CD8-positive, alpha-beta T cell (primary cell): ENCODE measurements at regions of chr19 and their contacts with region 1.

Region 1: DNA sequence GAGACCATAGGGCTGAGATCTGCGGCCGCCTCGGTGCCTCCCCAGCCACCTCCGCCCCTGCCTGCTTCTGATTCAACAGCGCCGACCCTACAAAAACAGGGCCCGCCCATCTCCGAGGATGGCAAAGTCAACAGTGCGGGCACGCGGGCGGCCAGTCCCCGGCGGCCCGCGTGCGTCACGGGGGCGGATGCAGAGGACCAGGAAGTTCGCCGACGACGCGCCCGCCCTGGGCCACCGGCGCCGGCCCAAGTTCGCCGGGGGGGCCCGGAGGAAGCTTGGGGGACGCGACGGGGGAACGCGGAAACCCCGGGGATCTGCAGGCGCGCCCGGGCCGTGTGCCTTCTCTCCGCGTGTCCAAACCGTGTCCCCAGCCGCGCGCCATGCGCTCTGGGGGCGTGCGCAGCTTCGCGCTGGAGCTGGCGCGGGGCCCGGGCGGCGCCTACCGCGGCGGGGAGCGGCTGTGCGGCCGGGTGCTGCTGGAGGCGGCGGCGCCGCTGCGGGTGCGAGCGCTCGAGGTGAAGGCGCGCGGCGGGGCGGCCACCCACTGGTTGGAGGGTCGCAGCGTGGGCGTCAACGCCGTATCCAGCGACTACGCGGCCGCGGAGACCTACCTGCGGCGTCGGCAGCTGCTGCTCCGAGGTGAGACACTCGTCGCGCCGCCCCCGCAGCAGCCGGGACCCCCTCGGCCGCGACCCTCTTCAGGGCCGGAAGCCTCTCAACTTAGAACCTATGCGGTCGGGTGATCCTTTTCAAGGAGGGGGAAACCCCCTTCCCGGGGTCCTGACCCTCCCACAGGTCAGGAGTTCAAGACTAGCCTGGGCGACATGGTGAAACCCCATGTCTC is 6.8 kb upstream of the ARRDC2 start:
- DNase-seq: peak; percentile 90 to 99 (median 96)
- ATAC-seq: peak; percentile 81
- H3K4me3 ChIP-seq: peak overlapping the region; percentile 65 to 69
- H3K4me3 Mint-ChIP-seq: peak overlapping the region; percentile 92
- H3K27ac ChIP-seq: peak overlapping the region; percentile 94
- H3K27ac Mint-ChIP-seq: peak overlapping the region; percentile 98
- H3K4me1 ChIP-seq: peaks cover 29% of the 10 kb centered on the region
- H3K4me1 Mint-ChIP-seq: peaks cover 32% of the 10 kb centered on the region
- H3K27me3 ChIP-seq: no peaks in the 10 kb centered on the region
- H3K27me3 Mint-ChIP-seq: no peaks in the 10 kb centered on the region
- CTCF ChIP-seq: no peak

Region 2: GRCh38 chr19:17448131-17448967 is 552.8 kb before region 1 on chr19 and contains the start of gene TMEM221:
- CTCF ChIA-PET with region 1: no interaction called
- POLR2A ChIA-PET with region 1: no interaction called
- intact Hi-C with region 1: loop called in 1 of 2 experiments (anchors 10 kb)
- DNase-seq: peak; percentile 16 to 76 (median 59)
- ATAC-seq: peak; percentile 81
- H3K4me3 ChIP-seq: peak within 1 kb of the TSS in 1 of 2 experiments; percentile 15
- H3K4me3 Mint-ChIP-seq: peak within 1 kb of the TSS; percentile 53
- H3K27ac ChIP-seq: no peak within 1 kb of the TSS
- H3K27ac Mint-ChIP-seq: no peak within 1 kb of the TSS
- H3K4me1 ChIP-seq: no peaks in the 10 kb centered on the region
- H3K4me1 Mint-ChIP-seq: peaks cover 11% of the 10 kb centered on the region
- H3K27me3 ChIP-seq: peaks cover 3 to 20% of the 10 kb centered on the region in 2 experiments
- H3K27me3 Mint-ChIP-seq: peaks cover 17% of the 10 kb centered on the region
- CTCF ChIP-seq: peak; percentile 61
- total RNA-seq, gene TMEM221: not detected

Region 3: GRCh38 chr19:17725422-17726078 is 275.6 kb before region 1 on chr19:
- CTCF ChIA-PET with region 1: no interaction called
- POLR2A ChIA-PET with region 1: no interaction called
- intact Hi-C with region 1: no loop called
- DNase-seq: peak in 4 of 9 experiments; percentile 22 to 37 (median 26)
- ATAC-seq: no peak
- H3K4me3 ChIP-seq: no peak overlapping the region
- H3K4me3 Mint-ChIP-seq: no peak overlapping the region
- H3K27ac ChIP-seq: no peak overlapping the region
- H3K27ac Mint-ChIP-seq: peak overlapping the region; percentile 45
- H3K4me1 ChIP-seq: peaks cover 17% of the 10 kb centered on the region
- H3K4me1 Mint-ChIP-seq: peaks cover 35% of the 10 kb centered on the region
- H3K27me3 ChIP-seq: no peaks in the 10 kb centered on the region
- H3K27me3 Mint-ChIP-seq: no peaks in the 10 kb centered on the region
- CTCF ChIP-seq: no peak

Region 4: GRCh38 chr19:17873786-17874757 is 127.1 kb before region 1 on chr19:
- CTCF ChIA-PET with region 1: no interaction called
- POLR2A ChIA-PET with region 1: no interaction called
- intact Hi-C with region 1: loop called in 1 of 2 experiments (anchors 5 kb)
- DNase-seq: peak; percentile 34 to 81 (median 66)
- ATAC-seq: peak; percentile 85
- H3K4me3 ChIP-seq: peak overlapping the region; percentile 47 to 59
- H3K4me3 Mint-ChIP-seq: peak overlapping the region; percentile 81
- H3K27ac ChIP-seq: no peak overlapping the region
- H3K27ac Mint-ChIP-seq: no peak overlapping the region
- H3K4me1 ChIP-seq: peaks cover 32% of the 10 kb centered on the region
- H3K4me1 Mint-ChIP-seq: peaks cover 16% of the 10 kb centered on the region
- H3K27me3 ChIP-seq: peaks cover 0 to 15% of the 10 kb centered on the region in 2 experiments
- H3K27me3 Mint-ChIP-seq: no peaks in the 10 kb centered on the region
- CTCF ChIP-seq: no peak

Region 5: DNA sequence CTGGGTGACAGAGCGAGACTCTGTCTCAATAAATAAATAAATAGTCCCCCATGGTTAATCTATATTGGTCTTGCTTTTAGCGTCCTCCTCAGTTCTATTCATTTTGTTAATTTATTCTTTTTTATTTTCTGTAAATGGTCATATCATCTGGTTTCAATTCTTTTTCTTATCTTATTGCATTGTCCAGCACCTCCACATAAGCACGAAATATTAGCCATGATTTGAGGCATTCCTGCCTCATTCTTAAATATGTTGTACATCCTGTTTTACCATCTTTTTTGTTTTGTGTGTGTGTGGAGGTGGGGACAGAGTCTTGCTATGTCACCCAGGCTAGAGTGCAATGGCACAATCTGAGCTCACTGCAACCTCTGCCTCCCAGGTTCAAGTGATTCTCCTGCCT is 92.9 kb before region 1 on chr19:
- CTCF ChIA-PET with region 1: no interaction called
- POLR2A ChIA-PET with region 1: no interaction called
- intact Hi-C with region 1: no loop called
- DNase-seq: no peak
- ATAC-seq: no peak
- H3K4me3 ChIP-seq: no peak overlapping the region
- H3K4me3 Mint-ChIP-seq: no peak overlapping the region
- H3K27ac ChIP-seq: no peak overlapping the region
- H3K27ac Mint-ChIP-seq: no peak overlapping the region
- H3K4me1 ChIP-seq: no peaks in the 10 kb centered on the region
- H3K4me1 Mint-ChIP-seq: no peaks in the 10 kb centered on the region
- H3K27me3 ChIP-seq: peaks cover 0 to 3% of the 10 kb centered on the region in 2 experiments
- H3K27me3 Mint-ChIP-seq: peaks cover 8% of the 10 kb centered on the region
- CTCF ChIP-seq: no peak

Region 6: GRCh38 chr19:17938092-17938845 is 62.9 kb before region 1 on chr19:
- CTCF ChIA-PET with region 1: interaction called, 510 read pairs
- POLR2A ChIA-PET with region 1: interaction called, 21 read pairs
- intact Hi-C with region 1: loop called (anchors 1 kb)
- DNase-seq: peak; percentile 69 to 90 (median 83)
- ATAC-seq: peak; percentile 99
- H3K4me3 ChIP-seq: no peak overlapping the region
- H3K4me3 Mint-ChIP-seq: no peak overlapping the region
- H3K27ac ChIP-seq: no peak overlapping the region
- H3K27ac Mint-ChIP-seq: no peak overlapping the region
- H3K4me1 ChIP-seq: peaks cover 7% of the 10 kb centered on the region
- H3K4me1 Mint-ChIP-seq: peaks cover 8% of the 10 kb centered on the region
- H3K27me3 ChIP-seq: no peaks in the 10 kb centered on the region
- H3K27me3 Mint-ChIP-seq: no peaks in the 10 kb centered on the region
- CTCF ChIP-seq: peak; percentile 82

Region 7: DNA sequence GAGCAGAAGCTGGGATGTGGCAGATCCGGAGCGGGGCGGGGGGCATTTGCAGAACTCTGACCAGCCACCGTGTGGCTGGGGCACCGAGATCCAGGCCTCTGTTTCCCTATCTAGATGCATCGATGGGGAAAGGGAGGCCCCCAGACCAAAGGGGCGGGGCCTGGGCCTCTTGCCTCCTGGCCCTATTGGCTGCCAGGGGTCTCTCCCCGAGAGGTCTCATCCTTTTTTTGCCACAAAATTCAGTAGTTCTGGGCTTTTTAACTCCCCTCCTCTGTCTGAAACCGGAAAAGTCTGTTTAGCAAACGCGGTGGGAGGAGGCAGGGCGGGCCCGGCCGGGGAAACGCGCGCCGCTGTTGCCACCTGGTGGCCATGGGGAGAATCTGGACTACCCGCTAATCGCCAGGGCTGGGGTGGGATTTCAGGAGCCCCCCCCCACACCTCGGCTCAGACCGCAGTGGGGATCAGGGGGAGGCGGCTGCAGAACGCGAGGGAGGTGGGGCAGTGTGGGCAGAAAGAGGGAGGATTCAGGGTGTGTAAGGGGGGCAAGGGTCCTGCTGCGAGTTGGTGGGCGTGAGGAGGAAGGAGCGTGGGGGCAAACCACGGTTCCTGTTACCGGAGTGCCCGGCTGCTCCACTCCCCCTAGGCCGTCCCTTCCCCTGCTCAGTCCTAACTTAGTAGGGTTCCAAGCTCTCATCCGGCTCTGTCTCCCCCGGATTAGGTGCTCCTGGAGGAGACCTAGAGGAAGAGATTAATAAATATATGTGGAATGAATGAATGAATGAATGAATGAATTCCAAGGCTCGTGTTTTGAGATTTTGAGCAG is 57.3 kb after region 1 on chr19:
- CTCF ChIA-PET with region 1: interaction called, 256 read pairs
- POLR2A ChIA-PET with region 1: interaction called, 27 read pairs
- intact Hi-C with region 1: no loop called
- DNase-seq: peak; percentile 67 to 92 (median 83)
- ATAC-seq: peak; percentile 98
- H3K4me3 ChIP-seq: peak overlapping the region in 1 of 2 experiments; percentile 23
- H3K4me3 Mint-ChIP-seq: peak overlapping the region; percentile 18
- H3K27ac ChIP-seq: peak overlapping the region; percentile 35 to 60
- H3K27ac Mint-ChIP-seq: peak overlapping the region; percentile 86
- H3K4me1 ChIP-seq: peaks cover 17% of the 10 kb centered on the region
- H3K4me1 Mint-ChIP-seq: peaks cover 12% of the 10 kb centered on the region
- H3K27me3 ChIP-seq: no peaks in the 10 kb centered on the region
- H3K27me3 Mint-ChIP-seq: no peaks in the 10 kb centered on the region
- CTCF ChIP-seq: peak; percentile 95